Mammary epithelial cell (primary cell): ENCODE measurements at regions of chr6 and their contacts with region 1.

Region 1: DNA sequence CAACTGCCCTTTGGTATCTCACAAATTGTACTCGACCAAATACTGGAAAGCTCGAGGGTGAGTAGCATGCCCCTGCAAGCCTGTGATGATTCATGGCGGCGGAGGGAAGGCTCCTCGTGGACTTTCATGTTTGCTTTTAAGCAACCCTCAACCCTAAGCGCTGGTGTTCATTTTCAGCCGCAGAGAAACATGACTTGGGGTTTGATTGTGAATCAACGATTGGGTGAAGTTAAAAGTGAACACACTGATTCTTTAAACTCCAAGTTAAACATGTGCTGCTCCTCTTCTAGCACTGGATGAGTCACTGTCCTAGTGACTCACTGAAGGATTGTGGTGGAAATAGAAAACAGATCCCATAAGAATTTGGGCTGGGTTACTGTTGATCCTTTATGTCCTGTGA is 8.3 kb downstream of the CD109 start:
- DNase-seq: peak; percentile 100
- H3K4me3 ChIP-seq: peak overlapping the region in 1 of 3 experiments; percentile 6
- H3K27ac ChIP-seq: peak overlapping the region; percentile 98
- H3K4me1 ChIP-seq: peaks cover 54% of the 10 kb centered on the region
- H3K27me3 ChIP-seq: no peaks in the 10 kb centered on the region
- CTCF ChIP-seq: no peak

Region 2: DNA sequence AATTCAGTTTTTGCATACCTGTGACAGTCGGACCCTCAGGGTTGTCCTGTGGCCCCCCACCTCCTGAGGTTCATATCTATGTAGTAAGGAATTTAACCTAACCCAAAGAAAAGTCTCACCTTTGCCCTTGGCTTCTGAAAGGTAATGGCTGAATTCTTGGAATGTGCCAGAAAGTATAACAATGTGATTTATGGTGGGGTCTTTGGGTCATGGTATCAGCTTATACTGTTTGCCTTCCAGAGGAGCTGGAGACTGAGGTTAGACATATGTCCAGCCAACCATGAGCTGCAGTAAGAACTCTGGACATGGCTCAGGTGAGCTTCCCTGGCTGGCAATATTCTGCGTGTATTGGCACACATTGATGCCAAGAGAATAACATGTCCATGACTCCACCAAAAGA is 282.7 kb before region 1 on chr6:
- CTCF ChIA-PET with region 1: no interaction called
- dilution Hi-C with region 1: no loop called
- in situ Hi-C with region 1: no loop called
- intact Hi-C with region 1: no loop called
- DNase-seq: no peak
- H3K4me3 ChIP-seq: no peak overlapping the region
- H3K27ac ChIP-seq: no peak overlapping the region
- H3K4me1 ChIP-seq: no peaks in the 10 kb centered on the region
- H3K27me3 ChIP-seq: no peaks in the 10 kb centered on the region
- CTCF ChIP-seq: no peak

Region 3: DNA sequence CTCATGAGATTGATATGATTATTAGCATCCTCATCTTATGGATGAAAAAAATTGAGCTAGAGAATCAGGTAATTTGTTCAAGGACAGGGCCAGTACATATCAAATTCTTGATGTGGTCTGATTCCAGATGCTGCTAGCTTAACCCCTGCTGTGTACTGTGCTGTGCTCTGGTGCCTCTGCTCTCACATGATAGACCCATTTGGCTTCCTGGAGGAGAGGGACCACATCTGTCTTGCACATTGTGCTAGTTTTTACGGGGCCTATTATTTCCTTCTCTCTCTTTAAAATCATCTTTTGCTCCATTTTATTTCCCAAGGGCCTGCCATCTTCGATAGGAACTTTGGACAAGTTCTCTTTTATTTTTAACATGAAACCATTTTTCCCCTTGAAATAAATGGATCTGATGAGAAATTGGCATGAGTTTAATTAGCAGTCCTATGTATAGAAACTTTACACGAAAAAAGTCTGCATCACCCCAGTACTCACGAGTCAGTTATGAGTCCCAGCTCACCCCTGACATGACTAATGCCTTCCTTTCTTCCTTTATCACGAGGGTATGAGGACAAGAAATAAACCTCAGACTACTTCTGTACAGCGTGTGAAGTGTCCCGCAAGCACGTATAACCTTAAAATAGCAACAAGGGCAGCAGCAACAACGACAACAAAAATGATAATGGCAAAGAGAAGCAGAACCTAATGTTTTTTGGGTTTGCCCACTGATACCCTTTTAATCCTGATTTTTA is 18.2 kb after region 1 on chr6:
- CTCF ChIA-PET with region 1: no interaction called
- dilution Hi-C with region 1: no loop called
- in situ Hi-C with region 1: no loop called
- intact Hi-C with region 1: loop called (anchors 2 kb)
- DNase-seq: peak; percentile 87
- H3K4me3 ChIP-seq: no peak overlapping the region
- H3K27ac ChIP-seq: peak overlapping the region; percentile 80
- H3K4me1 ChIP-seq: peaks cover 11% of the 10 kb centered on the region
- H3K27me3 ChIP-seq: no peaks in the 10 kb centered on the region
- CTCF ChIP-seq: no peak

Region 4: DNA sequence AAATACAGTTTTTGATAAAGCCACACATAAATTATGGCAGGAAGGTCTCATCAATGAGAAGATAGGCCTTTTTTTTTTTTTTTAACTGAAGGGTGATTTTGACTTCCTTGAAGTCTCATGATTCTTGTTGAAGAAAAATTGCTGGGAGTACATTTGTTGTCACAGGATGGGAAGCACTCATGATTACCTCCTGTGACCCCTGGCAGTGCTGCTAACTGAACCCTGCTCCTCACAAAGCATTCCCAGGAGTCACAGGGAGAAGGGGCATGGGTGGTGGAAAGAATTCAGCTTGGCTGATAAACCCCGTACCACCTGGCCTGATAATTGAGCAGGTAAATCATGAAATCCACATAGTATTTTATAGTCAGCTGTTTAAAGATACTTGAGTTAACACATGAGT is 78.7 kb after region 1 on chr6:
- CTCF ChIA-PET with region 1: no interaction called
- dilution Hi-C with region 1: no loop called
- in situ Hi-C with region 1: no loop called
- intact Hi-C with region 1: no loop called
- DNase-seq: no peak
- H3K4me3 ChIP-seq: no peak overlapping the region
- H3K27ac ChIP-seq: no peak overlapping the region
- H3K4me1 ChIP-seq: no peaks in the 10 kb centered on the region
- H3K27me3 ChIP-seq: no peaks in the 10 kb centered on the region
- CTCF ChIP-seq: no peak